ENCODE measurements at regions of chr3 and their contacts with region 1.

Region 1: DNA sequence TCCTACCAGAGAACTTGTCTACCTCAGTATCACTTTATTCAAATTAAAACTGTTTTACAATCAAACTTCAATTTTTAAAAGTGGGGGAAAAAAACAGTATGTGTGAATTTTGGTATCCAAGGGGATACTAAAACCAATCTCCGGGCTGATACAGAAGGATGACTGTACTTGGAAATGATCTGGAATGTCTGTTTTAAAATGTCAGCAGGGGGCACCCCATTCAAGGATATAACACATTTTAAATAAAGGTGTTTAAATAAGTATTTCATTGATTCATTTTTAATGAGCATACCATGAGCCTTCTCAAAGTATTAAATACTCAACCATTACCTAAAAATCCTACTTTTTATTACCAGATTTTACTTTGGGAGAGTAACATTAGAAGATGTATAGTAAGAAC is 67.9 kb downstream of the ULK4 start:
- DNase-seq: peak in 2 of 5 donors; percentile 49 to 67
- H3K4me3 ChIP-seq: no peak overlapping the region
- H3K27ac ChIP-seq: no peak overlapping the region
- H3K4me1 ChIP-seq: peaks cover 0 to 4% (median 0%) of the 10 kb centered on the region in 3 donors
- H3K27me3 ChIP-seq: no peaks in the 10 kb centered on the region
- CTCF ChIP-seq: peak; percentile 55

Region 2: GRCh38 chr3:42090973-42091731 is 197.2 kb after region 1 on chr3 and contains the start of gene TRAK1:
- intact Hi-C with region 1: loop called (anchors 10 kb)
- DNase-seq: no peak
- H3K4me3 ChIP-seq: peak within 1 kb of the TSS in 1 of 3 donors; percentile 23
- H3K27ac ChIP-seq: peak within 1 kb of the TSS; percentile 24 to 44
- H3K4me1 ChIP-seq: peaks cover 0 to 10% (median 8%) of the 10 kb centered on the region in 3 donors
- H3K27me3 ChIP-seq: no peaks in the 10 kb centered on the region
- CTCF ChIP-seq: no peak
- total RNA-seq, gene TRAK1: 41.0 TPM

Measured in kidney (tissue), 22 donors.